ENCODE measurements at regions of chr17 and their contacts with region 1.

Region 1: GRCh38 chr17:2435181-2435741 is 34.4 kb upstream of the MNT start:
- DNase-seq: no peak
- H3K4me3 ChIP-seq: no peak overlapping the region
- H3K27ac ChIP-seq: no peak overlapping the region
- H3K4me1 ChIP-seq: no peaks in the 10 kb centered on the region
- CTCF ChIP-seq: no peak

Region 2: DNA sequence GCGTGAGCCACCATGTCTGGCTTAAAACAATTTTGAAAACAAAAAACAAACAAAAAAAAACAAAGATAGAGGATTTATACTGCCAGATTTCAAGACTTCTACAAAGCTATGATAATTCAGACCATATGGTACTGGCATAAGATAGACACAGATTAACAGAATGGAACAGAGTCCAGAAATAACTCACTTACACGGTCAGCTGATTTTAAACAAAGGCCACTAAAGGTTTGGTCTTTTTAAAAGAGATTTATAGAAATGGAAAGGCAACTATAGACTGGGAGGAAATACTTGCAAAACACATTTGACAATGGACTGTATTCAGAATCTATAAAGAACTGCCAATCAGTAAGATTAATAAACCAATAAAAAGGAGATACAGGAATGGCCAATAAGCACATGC is 14.2 kb after region 1 on chr17:
- CTCF ChIA-PET with region 1: no interaction called
- POLR2A ChIA-PET with region 1: no interaction called
- intact Hi-C with region 1: no loop called
- DNase-seq: peak; percentile 12
- H3K4me3 ChIP-seq: peak overlapping the region; percentile 5
- H3K27ac ChIP-seq: peak overlapping the region; percentile 10
- H3K4me1 ChIP-seq: peaks cover 12% of the 10 kb centered on the region
- CTCF ChIP-seq: no peak

Region 3: GRCh38 chr17:2459917-2460271 is 24.6 kb after region 1 on chr17:
- CTCF ChIA-PET with region 1: no interaction called
- POLR2A ChIA-PET with region 1: no interaction called
- intact Hi-C with region 1: no loop called
- DNase-seq: no peak
- H3K4me3 ChIP-seq: no peak overlapping the region
- H3K27ac ChIP-seq: no peak overlapping the region
- H3K4me1 ChIP-seq: no peaks in the 10 kb centered on the region
- CTCF ChIP-seq: no peak

Region 4: GRCh38 chr17:2688351-2689342 is 253.4 kb after region 1 on chr17:
- CTCF ChIA-PET with region 1: no interaction called
- POLR2A ChIA-PET with region 1: no interaction called
- intact Hi-C with region 1: loop called (anchors 10 kb)
- DNase-seq: no peak
- H3K4me3 ChIP-seq: no peak overlapping the region
- H3K27ac ChIP-seq: no peak overlapping the region
- H3K4me1 ChIP-seq: no peaks in the 10 kb centered on the region
- CTCF ChIP-seq: no peak